ENCODE measurements at regions of chr12 and their contacts with region 1.

Region 1: GRCh38 chr12:57005980-57006808 is at the start of gene ZBTB39:
- DNase-seq: peak in 1 of 2 donors; percentile 68
- ATAC-seq: peak; percentile 73
- total RNA-seq, gene ZBTB39: 3.2 to 4.5 TPM

Region 2: GRCh38 chr12:56751712-56752598 is 254.2 kb before region 1 on chr12 and contains the start of gene PRIM1:
- intact Hi-C with region 1: loop called in 1 of 2 experiments (anchors 10 kb)
- DNase-seq: peak; percentile 81 to 89
- ATAC-seq: peak; percentile 94
- total RNA-seq, gene PRIM1: 3.9 to 5.3 TPM

Region 3: GRCh38 chr12:57063991-57064685 is 57.9 kb after region 1 on chr12:
- intact Hi-C with region 1: loop called in 1 of 2 experiments (anchors 5 kb)
- DNase-seq: no peak
- ATAC-seq: no peak